Sciatic nerve (tissue), 2 donors: ENCODE measurements at regions of chr13 and their contacts with region 1.

Region 1: GRCh38 chr13:100619940-100620339 is 31.4 kb upstream of the GGACT start:
- DNase-seq: no peak
- ATAC-seq: no peak

Region 2: GRCh38 chr13:100334214-100334613 is 285.7 kb before region 1 on chr13:
- intact Hi-C with region 1: loop called (anchors 5 kb)
- DNase-seq: no peak
- ATAC-seq: no peak

Region 3: GRCh38 chr13:100581504-100581903 is 38.4 kb before region 1 on chr13:
- intact Hi-C with region 1: no loop called
- DNase-seq: no peak
- ATAC-seq: no peak